ENCODE measurements at regions of chr9 and their contacts with region 1.

Region 1: GRCh38 chr9:1536522-1537170 is 478.5 kb upstream of the SMARCA2 start:
- DNase-seq: peak; percentile 38
- ATAC-seq: peak; percentile 86
- H3K4me3 ChIP-seq: no peak overlapping the region
- H3K27ac ChIP-seq: no peak overlapping the region
- H3K4me1 ChIP-seq: peaks cover 6% of the 10 kb centered on the region; the same call in 1 of the 2 replicates
- H3K27me3 ChIP-seq: no peaks in the 10 kb centered on the region
- CTCF ChIP-seq: no peak
- EP300 ChIP-seq: peak; percentile 64 to 85; a peak in 3 of 4 replicates
- POLR2A ChIP-seq: no peak
- RAD21 ChIP-seq: no peak

Region 2: DNA sequence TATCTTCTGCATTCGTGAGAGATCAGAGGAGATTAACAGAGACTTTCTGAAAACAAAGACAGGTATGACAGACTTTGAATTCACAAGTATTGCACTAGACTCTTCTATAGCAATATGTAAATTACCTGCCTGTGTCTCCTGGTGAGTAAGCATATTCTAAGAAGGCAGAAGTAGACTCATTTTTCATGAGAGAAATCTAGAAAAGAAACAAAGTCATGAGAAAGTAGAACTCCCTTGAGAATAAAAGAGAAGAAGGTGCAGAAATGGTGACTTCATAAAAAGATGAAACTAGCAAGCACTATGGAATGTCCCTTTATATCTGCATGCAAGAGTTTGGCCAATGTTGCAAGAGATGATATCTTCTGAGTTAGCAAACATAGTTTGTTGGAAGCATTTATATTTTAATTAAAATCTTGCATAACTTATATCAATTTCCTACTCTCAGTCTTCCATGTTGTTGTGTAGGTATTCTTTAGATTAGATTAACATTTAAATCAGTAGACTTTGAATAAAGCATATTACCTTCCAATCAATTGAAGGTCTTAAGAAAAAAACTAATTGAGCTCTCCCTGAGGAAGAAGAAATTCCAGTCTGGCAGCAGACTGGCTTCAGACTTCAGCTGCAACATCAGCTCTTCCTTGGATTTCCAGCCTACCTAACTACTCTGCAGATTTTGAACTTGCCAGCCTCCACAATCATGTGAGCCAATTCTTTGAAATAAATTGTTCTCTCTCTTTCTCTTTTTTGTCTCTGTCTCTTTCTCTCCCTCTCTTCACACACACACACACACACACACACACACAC is 66.4 kb before region 1 on chr9:
- CTCF ChIA-PET with region 1: no interaction called
- POLR2A ChIA-PET with region 1: no interaction called
- RAD21 ChIA-PET with region 1: no interaction called
- SMC1A ChIA-PET with region 1: interaction called, 4 read pairs
- in situ Hi-C with region 1: no loop called
- intact Hi-C with region 1: loop called (anchors 2 kb)
- DNase-seq: peak; percentile 68
- ATAC-seq: peak; percentile 95
- H3K4me3 ChIP-seq: no peak overlapping the region
- H3K27ac ChIP-seq: peak overlapping the region; percentile 44
- H3K4me1 ChIP-seq: peaks cover 17% of the 10 kb centered on the region
- H3K27me3 ChIP-seq: no peaks in the 10 kb centered on the region
- CTCF ChIP-seq: no peak
- EP300 ChIP-seq: no peak
- POLR2A ChIP-seq: no peak
- RAD21 ChIP-seq: no peak

Region 3: DNA sequence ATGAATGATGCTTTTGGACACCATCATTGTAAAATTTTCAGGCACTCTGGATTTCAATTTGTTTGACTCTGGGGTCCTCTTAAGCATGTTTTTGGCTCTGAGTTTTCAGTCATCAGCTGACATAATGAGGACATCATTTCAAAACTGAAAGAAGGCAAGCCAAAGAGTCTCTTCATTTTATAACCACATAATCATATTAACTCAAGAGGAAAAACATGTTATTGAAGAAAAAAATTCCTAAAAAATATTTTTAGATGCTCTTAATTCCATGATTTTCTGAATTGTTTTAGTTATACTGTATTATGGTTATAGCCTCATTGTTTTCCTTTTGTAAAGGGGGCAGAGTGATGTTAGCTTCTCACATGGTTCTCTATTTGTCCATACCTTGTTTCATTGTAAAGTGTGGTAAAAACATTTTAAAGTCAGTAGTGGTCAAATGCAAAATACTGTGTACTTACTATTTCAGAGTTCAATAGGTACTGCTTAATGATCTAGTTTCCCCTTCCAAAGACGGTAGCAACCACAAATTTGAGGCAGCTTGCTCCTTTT is 14.4 kb before region 1 on chr9:
- CTCF ChIA-PET with region 1: interaction called, 7 read pairs
- POLR2A ChIA-PET with region 1: interaction called, 4 read pairs
- RAD21 ChIA-PET with region 1: interaction called, 11 read pairs
- SMC1A ChIA-PET with region 1: interaction called, 25 read pairs
- in situ Hi-C with region 1: no loop called
- intact Hi-C with region 1: no loop called
- DNase-seq: no peak
- ATAC-seq: peak; percentile 92
- H3K4me3 ChIP-seq: no peak overlapping the region
- H3K27ac ChIP-seq: no peak overlapping the region
- H3K4me1 ChIP-seq: no peaks in the 10 kb centered on the region; the same call in 1 of the 2 replicates
- H3K27me3 ChIP-seq: no peaks in the 10 kb centered on the region
- CTCF ChIP-seq: peak in 1 of 3 experiments; percentile 22; a peak in 1 of 6 replicates
- EP300 ChIP-seq: peak in 1 of 2 experiments; percentile 45; a peak in 1 of 4 replicates
- POLR2A ChIP-seq: no peak
- RAD21 ChIP-seq: 0 out of 2 replicates have a peak, but pooled peaks have one; percentile 14

Region 4: GRCh38 chr9:1554081-1555035 is 17.7 kb after region 1 on chr9:
- CTCF ChIA-PET with region 1: interaction called, 8 read pairs
- POLR2A ChIA-PET with region 1: interaction called, 7 read pairs
- RAD21 ChIA-PET with region 1: interaction called, 11 read pairs
- SMC1A ChIA-PET with region 1: interaction called, 36 read pairs
- in situ Hi-C with region 1: no loop called
- intact Hi-C with region 1: no loop called
- DNase-seq: peak; percentile 24
- ATAC-seq: peak; percentile 85
- H3K4me3 ChIP-seq: no peak overlapping the region
- H3K27ac ChIP-seq: no peak overlapping the region
- H3K4me1 ChIP-seq: no peaks in the 10 kb centered on the region
- H3K27me3 ChIP-seq: no peaks in the 10 kb centered on the region; a peak in 1 of 4 replicates
- CTCF ChIP-seq: no peak
- EP300 ChIP-seq: no peak; a peak in 1 of 4 replicates
- POLR2A ChIP-seq: no peak
- RAD21 ChIP-seq: no peak

Region 5: DNA sequence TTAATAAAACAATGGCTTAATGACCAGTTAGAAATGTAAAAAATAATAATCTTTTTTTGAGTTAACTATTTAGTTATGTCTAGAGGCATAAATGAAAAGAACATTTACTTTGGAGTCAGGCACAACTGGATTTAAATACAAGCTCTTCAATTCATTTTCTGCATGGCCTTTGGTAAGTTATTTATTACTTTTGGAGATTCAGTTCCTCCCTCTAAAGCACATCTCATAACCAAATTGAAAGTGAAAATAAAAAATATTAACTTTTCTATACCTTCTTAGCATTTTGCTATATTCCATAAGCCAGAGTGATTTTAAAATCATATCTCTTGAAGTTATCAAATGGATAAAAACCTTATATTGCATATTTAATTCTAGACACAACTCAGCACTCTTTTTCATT is 43.6 kb after region 1 on chr9:
- CTCF ChIA-PET with region 1: no interaction called
- POLR2A ChIA-PET with region 1: no interaction called
- RAD21 ChIA-PET with region 1: interaction called, 3 read pairs
- SMC1A ChIA-PET with region 1: interaction called, 19 read pairs
- in situ Hi-C with region 1: no loop called
- intact Hi-C with region 1: no loop called
- DNase-seq: no peak
- ATAC-seq: peak; percentile 92
- H3K4me3 ChIP-seq: no peak overlapping the region
- H3K27ac ChIP-seq: no peak overlapping the region
- H3K4me1 ChIP-seq: 0 out of 2 replicates have a peak, but pooled peaks cover 2% of the 10 kb centered on the region
- H3K27me3 ChIP-seq: no peaks in the 10 kb centered on the region
- CTCF ChIP-seq: no peak
- EP300 ChIP-seq: no peak
- POLR2A ChIP-seq: no peak
- RAD21 ChIP-seq: no peak

Region 6: DNA sequence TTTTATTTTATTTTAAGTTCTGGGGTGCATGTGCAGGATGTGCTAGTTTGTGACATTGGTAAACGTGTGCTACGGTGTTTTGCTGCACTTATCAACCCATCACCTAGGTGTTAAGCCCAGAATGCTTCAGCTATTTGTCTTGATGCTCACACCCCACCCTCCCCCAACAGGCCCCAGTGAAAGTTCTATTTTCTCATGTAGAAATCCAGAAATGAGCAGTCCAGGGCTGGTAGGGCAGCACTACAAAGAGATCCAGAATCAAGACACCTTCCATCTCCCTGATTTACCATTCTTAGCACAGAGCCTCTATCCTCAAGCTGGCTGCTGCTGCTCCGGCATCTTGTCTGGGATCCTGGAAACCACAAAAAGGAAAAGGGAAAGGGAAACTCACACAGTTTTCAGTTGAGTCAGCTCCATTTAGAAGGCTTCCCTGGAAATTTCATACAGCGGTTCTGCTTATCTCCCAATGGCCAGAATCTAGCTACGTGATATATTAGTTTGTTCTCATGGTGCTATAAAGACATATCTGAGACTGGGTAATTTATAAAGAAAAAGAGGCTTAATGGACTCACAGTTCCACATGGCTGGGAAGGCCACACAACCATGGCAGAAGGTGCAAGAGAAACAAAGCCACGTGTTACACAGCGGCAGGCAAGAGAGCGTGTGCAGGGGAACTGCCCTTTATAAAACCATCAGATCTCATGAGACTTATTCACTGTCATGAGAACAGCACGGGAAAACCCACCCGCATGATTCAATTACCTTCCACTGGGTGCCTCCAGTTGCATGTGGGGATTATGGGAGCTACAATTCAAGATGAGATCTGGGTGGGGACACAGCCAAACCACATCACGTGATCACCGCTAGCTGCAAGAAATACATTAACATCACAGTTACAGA is 393.3 kb after region 1 on chr9:
- CTCF ChIA-PET with region 1: no interaction called
- POLR2A ChIA-PET with region 1: no interaction called
- RAD21 ChIA-PET with region 1: no interaction called
- SMC1A ChIA-PET with region 1: no interaction called
- in situ Hi-C with region 1: no loop called
- intact Hi-C with region 1: loop called (anchors 10 kb)
- DNase-seq: peak; percentile 84
- ATAC-seq: peak; percentile 87
- H3K4me3 ChIP-seq: peak overlapping the region; percentile 58
- H3K27ac ChIP-seq: peak overlapping the region; percentile 88
- H3K4me1 ChIP-seq: peaks cover 24% of the 10 kb centered on the region
- H3K27me3 ChIP-seq: no peaks in the 10 kb centered on the region
- CTCF ChIP-seq: 0 out of 6 replicates have a peak, but pooled peaks of 1 of the 3 experiments have one; percentile 6
- EP300 ChIP-seq: peak; percentile 39 to 73; a peak in 1 of 4 replicates
- POLR2A ChIP-seq: no peak
- RAD21 ChIP-seq: peak; percentile 44

Measured in GM12878 (cell line).